PC-9 (cell line): ENCODE measurements at regions of chr7 and their contacts with region 1.

Region 1: DNA sequence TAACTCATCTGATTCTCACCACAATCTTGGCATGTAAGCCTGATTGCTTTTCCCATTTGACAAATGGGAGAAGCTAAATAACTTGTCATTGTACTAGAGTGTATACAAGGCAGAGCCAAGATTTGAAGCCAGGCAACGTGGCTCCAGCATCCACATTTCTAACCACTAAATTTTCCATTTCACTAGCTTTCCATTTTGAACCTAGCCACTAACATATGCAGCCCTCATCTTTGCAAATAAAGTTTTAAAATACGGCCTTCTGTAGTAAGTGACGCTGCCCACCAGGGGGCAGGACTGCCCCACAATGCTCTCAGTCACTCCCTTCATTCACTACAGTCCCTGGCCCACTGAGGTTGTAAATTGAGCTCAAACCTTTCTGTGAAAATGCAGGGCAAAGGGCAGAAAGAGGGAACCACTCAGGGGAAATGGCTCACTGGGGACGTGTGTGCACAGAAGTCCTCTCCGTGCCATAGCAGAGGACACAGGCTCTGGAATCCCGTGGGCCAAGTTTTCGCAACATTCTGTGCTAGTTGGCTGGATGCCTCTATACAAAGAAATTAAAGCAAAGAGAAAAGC is 315.7 kb downstream of the TNS3 start:
- DNase-seq: peak; percentile 49 to 73
- H3K4me3 ChIP-seq: no peak overlapping the region
- H3K27ac ChIP-seq: no peak overlapping the region
- H3K4me1 ChIP-seq: peaks cover 10% of the 10 kb centered on the region
- H3K27me3 ChIP-seq: no peaks in the 10 kb centered on the region
- CTCF ChIP-seq: peak; percentile 100

Region 2: DNA sequence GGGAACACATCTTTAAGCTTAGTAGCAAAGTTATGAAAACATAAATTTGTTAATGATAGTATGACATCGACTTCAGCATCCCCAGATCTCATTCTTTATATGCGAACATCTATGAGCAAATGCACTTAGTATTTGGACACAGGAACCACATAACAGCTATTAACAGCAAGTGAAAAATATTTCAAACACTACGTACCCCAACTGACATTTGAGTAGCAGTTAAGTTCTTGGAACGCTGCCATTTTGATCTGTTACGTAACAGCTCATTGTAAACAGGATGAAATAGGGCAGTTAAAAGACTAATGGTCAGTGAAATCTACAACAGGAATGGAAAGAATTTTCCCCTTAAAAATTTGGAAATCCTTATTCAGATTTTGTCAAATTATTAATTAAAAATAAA is 113.1 kb before region 1 on chr7:
- CTCF ChIA-PET with region 1: no interaction called
- POLR2A ChIA-PET with region 1: no interaction called
- intact Hi-C with region 1: no loop called
- DNase-seq: peak; percentile 49 to 77
- H3K4me3 ChIP-seq: no peak overlapping the region
- H3K27ac ChIP-seq: no peak overlapping the region
- H3K4me1 ChIP-seq: peaks cover 14% of the 10 kb centered on the region
- H3K27me3 ChIP-seq: no peaks in the 10 kb centered on the region
- CTCF ChIP-seq: no peak

Region 3: GRCh38 chr7:47314728-47315607 is 48.7 kb after region 1 on chr7:
- CTCF ChIA-PET with region 1: no interaction called
- POLR2A ChIA-PET with region 1: no interaction called
- intact Hi-C with region 1: no loop called
- DNase-seq: no peak
- H3K4me3 ChIP-seq: no peak overlapping the region
- H3K27ac ChIP-seq: no peak overlapping the region
- H3K4me1 ChIP-seq: no peaks in the 10 kb centered on the region
- H3K27me3 ChIP-seq: no peaks in the 10 kb centered on the region
- CTCF ChIP-seq: no peak

Region 4: DNA sequence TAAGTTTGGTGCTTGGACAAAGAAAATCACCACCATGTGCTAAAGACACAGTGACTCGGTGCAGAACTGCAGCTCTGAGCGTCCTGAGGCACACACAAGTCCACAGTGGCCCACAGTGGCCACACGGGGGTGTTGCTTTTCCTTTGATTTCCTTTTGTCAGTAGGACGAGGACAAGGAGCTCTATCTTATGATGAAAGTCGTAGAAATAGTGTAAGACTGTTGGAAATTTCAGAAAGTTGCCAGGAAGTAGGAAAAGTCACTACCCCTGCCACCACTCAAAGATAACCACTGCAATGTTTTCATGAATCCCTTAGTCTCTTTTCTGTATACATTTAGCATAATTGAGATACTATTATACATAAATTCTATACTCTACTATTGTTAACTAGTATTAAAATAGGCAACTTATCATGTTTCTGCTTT is 169.7 kb after region 1 on chr7:
- CTCF ChIA-PET with region 1: interaction called, 4 read pairs
- POLR2A ChIA-PET with region 1: no interaction called
- intact Hi-C with region 1: loop called (anchors 5 kb)
- DNase-seq: peak in 1 of 2 experiments; percentile 60
- H3K4me3 ChIP-seq: no peak overlapping the region
- H3K27ac ChIP-seq: 0 out of 2 replicates have a peak overlapping the region, but pooled peaks have one; percentile 32
- H3K4me1 ChIP-seq: peaks cover 7% of the 10 kb centered on the region
- H3K27me3 ChIP-seq: no peaks in the 10 kb centered on the region
- CTCF ChIP-seq: peak; percentile 59

Region 5: DNA sequence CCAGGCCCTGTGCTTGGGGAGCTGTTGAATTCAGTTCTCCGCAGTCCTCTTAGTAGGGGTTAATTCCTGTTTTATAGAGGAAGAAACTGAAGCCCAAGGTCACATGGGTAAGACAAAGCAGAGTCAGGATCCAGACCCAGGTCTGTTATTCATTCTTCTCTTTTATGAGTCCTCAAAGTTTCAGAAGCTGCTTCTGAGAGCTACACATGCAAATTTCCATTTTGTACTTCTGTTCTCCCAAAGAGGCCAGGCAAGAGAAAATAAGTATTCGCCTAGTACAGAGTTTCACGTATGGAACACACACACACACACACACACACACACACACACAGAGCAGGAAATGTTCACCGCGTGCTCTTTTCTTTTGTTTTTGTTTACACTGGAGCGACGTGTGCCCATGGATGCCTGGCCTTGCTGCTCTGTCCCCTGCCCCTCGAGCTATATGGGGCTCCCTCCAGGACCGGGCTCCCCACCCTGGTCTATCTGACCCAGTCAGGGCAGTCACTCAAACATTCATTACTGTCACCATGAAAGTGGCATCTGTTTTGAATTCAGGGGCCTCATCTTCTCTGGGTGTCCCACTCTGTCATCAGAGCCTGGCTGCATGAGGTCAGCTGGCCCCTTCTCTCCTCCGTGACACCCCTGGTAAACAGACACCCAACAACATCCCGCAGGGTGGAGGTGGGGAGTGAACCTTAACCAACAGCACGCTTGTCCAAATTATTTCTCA is 231.3 kb after region 1 on chr7:
- CTCF ChIA-PET with region 1: no interaction called
- POLR2A ChIA-PET with region 1: interaction called, 10 read pairs
- intact Hi-C with region 1: no loop called
- DNase-seq: no peak
- H3K4me3 ChIP-seq: no peak overlapping the region
- H3K27ac ChIP-seq: no peak overlapping the region
- H3K4me1 ChIP-seq: peaks cover 26% of the 10 kb centered on the region
- H3K27me3 ChIP-seq: no peaks in the 10 kb centered on the region
- CTCF ChIP-seq: no peak

Region 6: DNA sequence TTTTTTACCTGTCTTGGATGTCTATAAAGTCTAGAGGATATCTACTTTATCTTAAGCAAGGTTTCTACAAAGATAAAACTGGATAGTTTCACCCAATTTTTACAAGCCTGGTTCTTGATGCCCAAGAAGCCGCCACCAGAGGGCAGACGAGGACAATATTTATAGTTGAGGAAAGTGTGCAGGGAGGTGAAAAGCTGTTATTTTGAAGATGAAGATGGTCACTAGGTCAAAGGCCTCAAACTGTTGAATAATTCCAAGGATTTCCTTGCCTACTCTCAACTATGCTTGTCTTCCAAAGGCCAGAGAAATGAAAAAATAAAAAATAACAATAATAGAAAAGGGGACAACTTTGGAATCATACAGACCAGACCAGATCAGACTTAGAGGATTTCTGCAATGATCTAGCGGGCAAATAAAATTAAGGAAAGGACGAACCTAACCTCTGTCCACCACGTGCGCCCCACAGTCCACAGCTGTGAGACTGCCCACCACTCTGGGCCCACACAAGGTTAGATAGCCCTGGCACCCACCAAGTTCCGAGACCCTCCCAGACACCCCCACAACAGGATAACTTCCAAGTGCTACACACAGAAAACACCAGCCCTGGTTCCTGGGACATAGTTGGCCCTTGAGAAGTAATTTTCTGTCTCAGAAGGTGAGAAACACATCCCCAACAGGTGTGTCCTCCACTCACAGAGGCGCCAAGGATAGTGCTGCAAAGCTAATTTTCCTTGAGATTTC is 679.2 kb after region 1 on chr7:
- CTCF ChIA-PET with region 1: interaction called, 14 read pairs
- POLR2A ChIA-PET with region 1: no interaction called
- intact Hi-C with region 1: no loop called
- DNase-seq: peak; percentile 58 to 66
- H3K4me3 ChIP-seq: no peak overlapping the region
- H3K27ac ChIP-seq: no peak overlapping the region
- H3K4me1 ChIP-seq: peaks cover 29% of the 10 kb centered on the region
- H3K27me3 ChIP-seq: no peaks in the 10 kb centered on the region
- CTCF ChIP-seq: peak; percentile 99

Region 7: DNA sequence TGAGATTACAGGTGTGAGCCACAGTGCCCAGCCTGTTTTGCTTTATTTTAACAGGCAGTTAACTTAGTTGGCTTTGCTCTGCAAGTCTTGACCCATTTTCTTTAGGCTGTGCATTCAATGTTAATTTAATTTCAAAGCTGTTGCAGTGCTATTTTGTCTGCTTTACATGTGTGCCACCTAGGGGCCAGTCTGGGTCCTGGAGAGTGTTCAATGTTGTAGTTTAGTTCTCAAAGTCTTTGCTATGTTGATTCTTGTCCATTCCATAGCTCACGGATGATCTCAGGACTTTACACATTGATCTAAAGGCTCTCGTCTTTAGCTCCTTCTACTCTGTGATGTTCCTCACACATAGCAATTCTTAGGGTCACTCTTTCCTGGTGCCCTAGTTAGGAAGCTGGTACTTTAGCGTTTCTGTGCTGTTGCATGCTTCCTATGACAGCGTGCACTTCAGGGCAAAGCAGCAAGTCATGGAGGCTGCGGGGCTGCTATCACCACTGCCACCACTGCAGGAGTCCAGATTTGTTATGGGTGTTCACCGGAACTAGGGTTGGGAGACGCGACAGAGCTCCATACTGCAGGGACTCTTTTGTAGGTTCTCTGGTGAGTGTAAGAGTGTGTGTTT is 888.7 kb after region 1 on chr7:
- CTCF ChIA-PET with region 1: interaction called, 7 read pairs
- POLR2A ChIA-PET with region 1: no interaction called
- intact Hi-C with region 1: loop called (anchors 2 kb)
- DNase-seq: peak; percentile 63 to 66
- H3K4me3 ChIP-seq: no peak overlapping the region
- H3K27ac ChIP-seq: no peak overlapping the region
- H3K4me1 ChIP-seq: peaks cover 7% of the 10 kb centered on the region; the same call in 1 of the 2 replicates
- H3K27me3 ChIP-seq: peaks cover 32% of the 10 kb centered on the region
- CTCF ChIP-seq: peak; percentile 93